OCI-LY7 (cell line): ENCODE measurements at regions of chr17 and their contacts with region 1.

Region 1: DNA sequence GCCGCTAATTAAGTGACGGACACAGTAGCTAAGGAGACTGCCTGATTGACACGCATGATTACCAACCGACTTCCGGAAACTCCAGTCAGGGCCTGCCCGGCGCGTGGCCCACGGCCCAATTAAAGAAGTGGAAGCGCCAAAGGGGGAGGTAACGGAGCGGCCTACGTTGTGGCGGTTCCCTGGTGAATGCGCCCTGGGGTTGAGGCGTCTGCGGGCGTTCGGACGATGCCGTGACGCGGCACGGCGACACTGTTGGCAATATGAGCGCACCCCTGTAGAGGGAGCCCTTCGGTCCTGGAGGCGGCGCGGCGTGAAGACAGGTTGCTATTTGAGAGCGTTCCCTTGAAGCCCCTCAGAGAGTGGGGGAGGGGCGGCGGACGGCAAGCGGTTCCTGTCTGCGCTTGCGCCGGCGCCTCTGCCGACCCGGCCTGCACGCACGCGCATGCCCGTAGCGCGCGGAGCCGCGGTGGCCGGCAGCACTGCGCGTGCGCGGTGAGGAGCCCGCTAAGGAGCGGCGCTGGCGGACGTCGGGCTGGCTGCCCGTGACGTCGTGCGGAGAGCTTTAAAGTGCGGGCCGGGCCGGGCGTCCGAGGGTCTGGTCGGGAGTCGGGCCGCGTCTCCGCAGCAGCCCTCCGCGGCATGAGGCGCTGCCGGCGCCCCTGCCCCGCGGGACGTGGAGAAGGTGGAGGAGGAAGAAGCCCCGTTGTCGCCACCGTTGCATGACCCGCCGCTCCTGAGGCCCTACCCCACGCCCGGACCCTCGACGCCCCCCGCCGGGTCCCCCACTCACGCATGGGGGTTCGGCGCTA is at the start of gene ALKBH5:
- DNase-seq: peak; percentile 100
- H3K4me3 ChIP-seq: peak within 1 kb of the TSS; percentile 84
- H3K27ac ChIP-seq: peak within 1 kb of the TSS; percentile 93
- H3K4me1 ChIP-seq: peaks cover 33% of the 10 kb centered on the region
- CTCF ChIP-seq: peak; percentile 53; the same call in 1 of the 2 replicates
- total RNA-seq, gene ALKBH5: 99.3 and 100 TPM in 2 replicates

Region 2: GRCh38 chr17:18141210-18141803 is 42.2 kb before region 1 on chr17:
- CTCF ChIA-PET with region 1: no interaction called
- POLR2A ChIA-PET with region 1: no interaction called
- intact Hi-C with region 1: loop called (anchors 2 kb)
- DNase-seq: peak; percentile 75
- H3K4me3 ChIP-seq: no peak overlapping the region
- H3K27ac ChIP-seq: no peak overlapping the region
- H3K4me1 ChIP-seq: no peaks in the 10 kb centered on the region
- CTCF ChIP-seq: peak; percentile 89

Region 3: DNA sequence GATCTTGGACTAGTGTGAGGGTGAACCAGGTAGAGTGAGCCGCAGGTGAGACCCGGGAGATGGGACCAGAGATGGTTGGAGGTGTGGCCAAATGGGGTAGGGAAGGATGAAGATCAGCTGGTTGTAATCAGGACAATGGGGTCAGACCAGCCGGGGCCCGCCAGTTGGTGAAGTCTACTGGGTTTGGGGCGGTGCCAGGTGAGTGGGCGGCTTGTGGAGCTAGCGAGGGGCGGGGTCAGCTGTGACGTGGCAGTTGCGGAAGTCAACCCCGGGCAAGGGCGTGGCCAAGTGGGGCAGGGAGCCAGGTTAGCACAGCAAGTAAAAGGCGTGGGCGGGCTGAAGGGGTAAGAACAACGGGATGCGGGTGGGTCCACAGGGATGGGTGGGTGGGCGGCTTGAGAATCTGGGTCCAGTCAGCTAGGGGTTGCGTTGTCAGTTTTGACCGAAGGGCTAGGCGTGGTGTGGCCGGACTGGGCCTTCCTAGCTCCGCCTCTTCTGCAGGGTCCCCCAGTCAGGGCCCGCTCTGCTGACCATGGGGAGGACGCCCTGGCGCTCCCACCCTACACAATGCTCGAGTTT is 25.4 kb before region 1 on chr17:
- CTCF ChIA-PET with region 1: interaction called, 3 read pairs
- POLR2A ChIA-PET with region 1: interaction called, 5 read pairs
- intact Hi-C with region 1: loop called (anchors 2 kb)
- DNase-seq: peak; percentile 92
- H3K4me3 ChIP-seq: peak overlapping the region; percentile 58
- H3K27ac ChIP-seq: no peak overlapping the region
- H3K4me1 ChIP-seq: peaks cover 32% of the 10 kb centered on the region
- CTCF ChIP-seq: no peak

Region 4: DNA sequence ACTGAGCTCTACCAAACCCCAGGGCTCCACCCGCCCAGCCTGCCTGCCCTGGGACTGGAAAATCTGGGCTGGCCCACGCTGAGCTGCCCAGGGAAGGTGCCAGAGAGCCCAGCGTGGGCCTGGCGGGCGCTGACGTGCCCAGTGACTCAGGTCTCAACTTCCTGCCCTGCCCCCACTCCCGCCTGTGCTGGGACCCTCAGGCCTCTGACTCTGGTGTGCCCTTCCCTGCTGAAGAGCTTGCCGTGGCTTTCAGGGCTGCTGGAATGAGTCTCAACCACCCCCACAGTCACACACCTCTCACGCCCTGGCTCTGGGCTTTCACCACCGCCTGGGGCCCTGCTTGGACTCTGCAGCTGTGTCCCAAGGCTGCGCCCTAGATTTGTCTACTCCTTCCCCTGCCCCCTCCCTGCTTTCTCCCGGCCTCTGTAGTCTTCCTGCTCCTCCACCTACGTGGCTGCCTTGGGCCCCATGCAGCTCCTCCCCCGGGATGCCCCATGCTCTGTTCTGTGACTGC is 52.3 kb after region 1 on chr17:
- CTCF ChIA-PET with region 1: no interaction called
- POLR2A ChIA-PET with region 1: no interaction called
- intact Hi-C with region 1: no loop called
- DNase-seq: no peak
- H3K4me3 ChIP-seq: no peak overlapping the region
- H3K27ac ChIP-seq: no peak overlapping the region
- H3K4me1 ChIP-seq: no peaks in the 10 kb centered on the region
- CTCF ChIP-seq: no peak

Region 5: GRCh38 chr17:18260332-18261144 is 77.0 kb after region 1 on chr17 and contains the start of gene MIEF2:
- CTCF ChIA-PET with region 1: no interaction called
- POLR2A ChIA-PET with region 1: interaction called, 5 read pairs
- intact Hi-C with region 1: loop called (anchors 2 kb)
- DNase-seq: peak; percentile 96
- H3K4me3 ChIP-seq: peak within 1 kb of the TSS; percentile 80
- H3K27ac ChIP-seq: peak within 1 kb of the TSS; percentile 49
- H3K4me1 ChIP-seq: peaks cover 33% of the 10 kb centered on the region
- CTCF ChIP-seq: no peak
- total RNA-seq, gene MIEF2: 7.6 and 7.9 TPM in 2 replicates